ENCODE measurements at regions of chr3 and their contacts with region 1.

Region 1: DNA sequence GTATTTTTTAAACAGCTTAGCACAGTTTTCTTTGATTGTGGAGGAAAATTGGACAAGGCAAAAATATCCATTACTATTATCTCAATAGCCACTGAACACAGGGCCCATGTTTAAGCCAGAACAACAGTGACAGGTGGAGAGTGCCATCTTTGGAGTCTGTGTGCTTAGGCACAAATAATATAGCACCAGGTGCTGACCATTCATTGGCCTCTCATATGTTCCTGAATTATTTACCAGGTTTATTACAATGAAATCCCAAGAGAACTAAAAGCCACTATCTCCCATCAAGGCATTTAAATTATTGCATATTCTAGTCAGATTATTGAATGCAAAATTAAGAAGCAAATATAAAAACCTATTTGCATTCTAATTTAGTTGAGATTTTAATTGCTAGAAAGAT is 39.6 kb downstream of the GPR156 start:
- DNase-seq: no peak
- ATAC-seq: no peak
- H3K4me3 ChIP-seq: no peak overlapping the region
- H3K27ac ChIP-seq: no peak overlapping the region
- H3K4me1 ChIP-seq: no peaks in the 10 kb centered on the region
- H3K27me3 ChIP-seq: peaks cover 0 to 2% of the 10 kb centered on the region in 2 donors
- CTCF ChIP-seq: no peak
- POLR2A ChIP-seq: no peak

Region 2: GRCh38 chr3:120410541-120410940 is 165.2 kb after region 1 on chr3:
- intact Hi-C with region 1: loop called (anchors 5 kb)
- DNase-seq: no peak
- ATAC-seq: no peak
- H3K4me3 ChIP-seq: no peak overlapping the region
- H3K27ac ChIP-seq: no peak overlapping the region
- H3K4me1 ChIP-seq: no peaks in the 10 kb centered on the region
- H3K27me3 ChIP-seq: no peaks in the 10 kb centered on the region
- CTCF ChIP-seq: no peak
- POLR2A ChIP-seq: no peak

Region 3: GRCh38 chr3:120558771-120559241 is 313.4 kb after region 1 on chr3:
- intact Hi-C with region 1: loop called (anchors 5 kb)
- DNase-seq: peak; percentile 92 to 93 (median 92)
- ATAC-seq: peak; percentile 82
- H3K4me3 ChIP-seq: peak overlapping the region in 1 of 2 donors; percentile 4
- H3K27ac ChIP-seq: peak overlapping the region in 3 of 4 donors; percentile 55 to 69 (median 60)
- H3K4me1 ChIP-seq: peaks cover 48% of the 10 kb centered on the region
- H3K27me3 ChIP-seq: no peaks in the 10 kb centered on the region
- CTCF ChIP-seq: peak; percentile 98 to 100 (median 99)
- POLR2A ChIP-seq: peak in 2 of 3 donors; percentile 12 to 59

Measured in body of pancreas (tissue), 4 donors.